Right cardiac atrium (tissue), 5 donors: ENCODE measurements at regions of chr9 and their contacts with region 1.

Region 1: GRCh38 chr9:77977210-77977611 is 54.4 kb downstream of the GNAQ start:
- DNase-seq: peak; percentile 59 to 89 (median 83)
- ATAC-seq: peak; percentile 92 to 94
- H3K4me3 ChIP-seq: no peak overlapping the region
- H3K27ac ChIP-seq: peak overlapping the region; percentile 70
- H3K4me1 ChIP-seq: peaks cover 2% of the 10 kb centered on the region
- H3K27me3 ChIP-seq: no peaks in the 10 kb centered on the region

Region 2: DNA sequence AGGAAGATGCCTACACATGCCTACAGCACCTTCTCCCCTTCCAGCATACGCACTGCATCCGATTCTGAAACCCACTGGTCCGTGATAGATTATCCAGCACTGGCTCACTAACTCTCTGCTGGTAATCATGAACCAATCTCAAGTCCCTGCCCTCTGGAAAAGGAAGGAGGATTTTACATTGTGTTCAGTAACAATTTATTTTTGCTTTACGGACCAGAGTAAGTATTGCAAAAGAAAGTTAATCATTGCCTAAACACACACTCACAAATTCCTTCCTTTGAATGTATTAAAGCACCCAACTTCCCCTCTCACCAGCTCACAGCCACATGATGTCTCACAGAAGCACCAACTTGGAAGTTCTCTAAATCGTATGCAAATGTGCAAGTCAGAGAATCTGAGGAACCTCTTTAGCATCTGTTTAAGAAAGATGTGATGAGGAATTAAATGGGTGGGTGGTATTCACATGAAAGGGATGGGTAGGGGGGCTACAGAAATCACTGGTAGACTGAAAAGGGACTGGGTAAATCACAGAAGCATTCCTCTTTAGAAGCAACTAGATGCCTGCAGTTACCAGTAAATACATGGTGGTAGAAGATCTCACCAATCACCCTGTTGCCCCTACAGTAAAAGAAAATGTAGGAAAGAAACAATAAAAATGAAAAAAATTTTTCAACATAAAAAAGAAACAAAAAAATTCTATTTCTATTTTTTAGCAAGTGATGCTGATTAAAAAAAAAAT is 46.0 kb after region 1 on chr9:
- intact Hi-C with region 1: loop called in 1 of 4 experiments (anchors 10 kb)
- DNase-seq: no peak
- ATAC-seq: peak; percentile 55 to 68
- H3K4me3 ChIP-seq: no peak overlapping the region
- H3K27ac ChIP-seq: no peak overlapping the region
- H3K4me1 ChIP-seq: peaks cover 9% of the 10 kb centered on the region
- H3K27me3 ChIP-seq: no peaks in the 10 kb centered on the region